MCF 10A (cell line): ENCODE measurements at regions of chr17 and their contacts with region 1.

Region 1: GRCh38 chr17:44123356-44124117 is at the start of gene HDAC5:
- DNase-seq: peak; percentile 92
- H3K4me3 Mint-ChIP-seq: peak within 1 kb of the TSS; percentile 86
- H3K27ac Mint-ChIP-seq: peak within 1 kb of the TSS; percentile 98
- H3K4me1 Mint-ChIP-seq: peaks cover 6% of the 10 kb centered on the region
- H3K27me3 Mint-ChIP-seq: no peaks in the 10 kb centered on the region
- CTCF ChIP-seq: peak; percentile 57
- total RNA-seq, gene HDAC5: 12.1 TPM in 2 replicates

Region 2: DNA sequence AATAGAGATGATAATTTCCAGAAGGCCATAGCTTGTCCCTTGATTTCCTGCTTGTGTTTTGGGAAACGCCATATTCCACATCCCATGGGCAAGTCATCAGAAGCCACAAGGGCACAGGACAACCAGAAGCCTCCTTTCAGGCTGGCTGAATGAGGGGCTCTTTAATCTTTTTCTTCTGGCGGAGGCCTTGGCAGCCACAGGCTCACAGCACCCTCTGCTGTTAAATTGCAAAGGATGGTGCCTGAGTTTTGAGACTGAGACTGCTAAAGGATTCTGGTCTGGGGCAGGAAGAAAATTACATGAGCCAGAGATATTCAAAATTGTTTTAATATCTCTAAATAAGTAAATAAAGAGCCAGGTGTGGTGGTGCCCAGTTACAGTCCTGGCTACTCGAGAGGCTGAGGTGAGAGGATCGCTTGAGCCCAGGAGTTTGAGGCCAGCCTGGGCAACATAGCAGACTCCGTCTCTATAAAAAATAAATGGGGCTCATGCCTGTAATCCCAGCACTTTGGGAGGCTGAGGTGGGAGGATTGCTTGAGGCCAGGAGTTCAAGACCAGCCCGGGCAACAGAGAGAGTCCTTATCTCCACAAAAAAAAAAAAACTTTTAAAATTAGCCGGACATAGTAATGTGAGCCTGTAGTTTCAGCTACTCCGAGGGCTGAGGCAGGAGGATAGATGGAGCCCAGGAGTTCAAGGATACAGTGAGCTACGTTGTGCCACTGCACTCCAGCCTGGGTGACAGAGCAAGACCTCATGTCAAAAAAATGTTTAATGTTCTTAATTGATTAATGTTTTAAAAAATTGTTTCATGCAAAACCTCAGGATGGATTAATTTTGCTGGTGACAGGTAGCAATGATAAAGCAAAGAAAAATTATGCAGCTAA is 1185.6 kb before region 1 on chr17:
- CTCF ChIA-PET with region 1: no interaction called
- POLR2A ChIA-PET with region 1: no interaction called
- intact Hi-C with region 1: no loop called
- DNase-seq: peak; percentile 60
- H3K4me3 Mint-ChIP-seq: no peak overlapping the region
- H3K27ac Mint-ChIP-seq: no peak overlapping the region
- H3K4me1 Mint-ChIP-seq: no peaks in the 10 kb centered on the region
- H3K27me3 Mint-ChIP-seq: peaks cover 12% of the 10 kb centered on the region
- CTCF ChIP-seq: peak; percentile 49

Region 3: DNA sequence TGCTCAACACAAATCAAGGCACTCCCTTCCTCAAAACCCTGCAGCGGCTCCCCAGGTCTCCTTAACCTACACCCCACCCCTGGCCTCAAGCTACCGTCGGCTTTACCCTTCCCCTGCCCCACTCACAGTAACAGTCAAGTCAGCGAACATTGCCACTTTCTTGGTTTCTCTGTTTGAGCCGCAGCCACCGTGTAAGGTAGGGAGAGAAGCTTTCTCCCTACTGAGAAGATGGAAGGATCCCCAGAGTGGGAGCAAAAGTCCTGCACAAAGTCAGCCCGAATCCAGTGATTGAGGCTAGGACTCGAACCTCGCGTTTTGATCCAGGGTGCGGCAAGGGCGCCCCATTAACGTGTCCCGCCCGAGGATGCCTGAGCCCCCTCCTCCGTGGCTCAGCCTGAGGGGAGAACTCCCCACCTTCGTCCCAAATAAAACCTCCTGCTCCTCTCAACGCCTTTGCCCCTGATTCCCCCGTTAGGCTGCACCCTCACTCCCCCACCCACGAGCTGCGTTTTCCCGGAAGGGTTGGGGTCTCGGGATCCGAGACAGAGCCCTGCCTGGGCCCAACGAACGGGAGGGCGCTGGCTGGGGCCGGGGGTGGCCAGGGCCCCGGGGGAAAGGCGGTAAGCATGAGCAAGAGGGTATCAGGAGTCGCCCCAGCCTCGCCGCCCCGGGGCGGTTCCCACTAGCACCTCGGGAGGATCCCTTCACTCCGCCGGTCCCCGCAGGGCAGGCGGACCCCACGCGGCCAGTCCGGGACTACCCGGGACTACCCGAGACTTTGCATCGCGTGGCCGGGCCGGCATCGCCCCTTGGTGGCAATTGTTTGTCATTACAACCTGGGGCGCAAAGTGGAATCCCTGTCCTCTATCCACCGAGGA is 129.0 kb before region 1 on chr17:
- CTCF ChIA-PET with region 1: no interaction called
- POLR2A ChIA-PET with region 1: no interaction called
- intact Hi-C with region 1: no loop called
- DNase-seq: peak; percentile 69
- H3K4me3 Mint-ChIP-seq: peak overlapping the region; percentile 64
- H3K27ac Mint-ChIP-seq: no peak overlapping the region
- H3K4me1 Mint-ChIP-seq: peaks cover 8% of the 10 kb centered on the region
- H3K27me3 Mint-ChIP-seq: no peaks in the 10 kb centered on the region
- CTCF ChIP-seq: peak; percentile 95

Region 4: GRCh38 chr17:44086364-44087311 is 36.9 kb before region 1 on chr17:
- CTCF ChIA-PET with region 1: interaction called, 4 read pairs
- POLR2A ChIA-PET with region 1: interaction called, 16 read pairs
- intact Hi-C with region 1: loop called (anchors 5 kb)
- DNase-seq: peak; percentile 90
- H3K4me3 Mint-ChIP-seq: peak overlapping the region; percentile 40
- H3K27ac Mint-ChIP-seq: peak overlapping the region; percentile 52
- H3K4me1 Mint-ChIP-seq: peaks cover 21% of the 10 kb centered on the region
- H3K27me3 Mint-ChIP-seq: no peaks in the 10 kb centered on the region
- CTCF ChIP-seq: no peak

Region 5: GRCh38 chr17:44108440-44109324 is 14.9 kb before region 1 on chr17:
- CTCF ChIA-PET with region 1: no interaction called
- POLR2A ChIA-PET with region 1: interaction called, 10 read pairs
- intact Hi-C with region 1: loop called (anchors 2 kb)
- DNase-seq: peak; percentile 86
- H3K4me3 Mint-ChIP-seq: no peak overlapping the region
- H3K27ac Mint-ChIP-seq: no peak overlapping the region
- H3K4me1 Mint-ChIP-seq: peaks cover 11% of the 10 kb centered on the region
- H3K27me3 Mint-ChIP-seq: no peaks in the 10 kb centered on the region
- CTCF ChIP-seq: no peak

Region 6: GRCh38 chr17:44141717-44142285 is 18.3 kb after region 1 on chr17 and contains the start of gene HROB:
- CTCF ChIA-PET with region 1: interaction called, 3 read pairs
- POLR2A ChIA-PET with region 1: interaction called, 66 read pairs
- intact Hi-C with region 1: no loop called
- DNase-seq: peak; percentile 98
- H3K4me3 Mint-ChIP-seq: peak within 1 kb of the TSS; percentile 78
- H3K27ac Mint-ChIP-seq: peak within 1 kb of the TSS; percentile 93
- H3K4me1 Mint-ChIP-seq: peaks cover 26% of the 10 kb centered on the region
- H3K27me3 Mint-ChIP-seq: no peaks in the 10 kb centered on the region
- CTCF ChIP-seq: peak; percentile 84
- total RNA-seq, gene HROB: 5.4 and 6.7 TPM in 2 replicates

Region 7: GRCh38 chr17:44170499-44171201 is 47.1 kb after region 1 on chr17 and contains the start of gene ASB16:
- CTCF ChIA-PET with region 1: interaction called, 14 read pairs
- POLR2A ChIA-PET with region 1: interaction called, 22 read pairs
- intact Hi-C with region 1: no loop called
- DNase-seq: no peak
- H3K4me3 Mint-ChIP-seq: no peak within 1 kb of the TSS
- H3K27ac Mint-ChIP-seq: no peak within 1 kb of the TSS
- H3K4me1 Mint-ChIP-seq: peaks cover 11% of the 10 kb centered on the region
- H3K27me3 Mint-ChIP-seq: no peaks in the 10 kb centered on the region
- CTCF ChIP-seq: no peak
- total RNA-seq, gene ASB16: not detected in 2 replicates

Region 8: GRCh38 chr17:44235583-44235936 is 112.0 kb after region 1 on chr17:
- CTCF ChIA-PET with region 1: no interaction called
- POLR2A ChIA-PET with region 1: no interaction called
- intact Hi-C with region 1: no loop called
- DNase-seq: peak; percentile 86
- H3K4me3 Mint-ChIP-seq: no peak overlapping the region
- H3K27ac Mint-ChIP-seq: peak overlapping the region; percentile 53
- H3K4me1 Mint-ChIP-seq: peaks cover 14% of the 10 kb centered on the region
- H3K27me3 Mint-ChIP-seq: no peaks in the 10 kb centered on the region
- CTCF ChIP-seq: no peak

Region 9: DNA sequence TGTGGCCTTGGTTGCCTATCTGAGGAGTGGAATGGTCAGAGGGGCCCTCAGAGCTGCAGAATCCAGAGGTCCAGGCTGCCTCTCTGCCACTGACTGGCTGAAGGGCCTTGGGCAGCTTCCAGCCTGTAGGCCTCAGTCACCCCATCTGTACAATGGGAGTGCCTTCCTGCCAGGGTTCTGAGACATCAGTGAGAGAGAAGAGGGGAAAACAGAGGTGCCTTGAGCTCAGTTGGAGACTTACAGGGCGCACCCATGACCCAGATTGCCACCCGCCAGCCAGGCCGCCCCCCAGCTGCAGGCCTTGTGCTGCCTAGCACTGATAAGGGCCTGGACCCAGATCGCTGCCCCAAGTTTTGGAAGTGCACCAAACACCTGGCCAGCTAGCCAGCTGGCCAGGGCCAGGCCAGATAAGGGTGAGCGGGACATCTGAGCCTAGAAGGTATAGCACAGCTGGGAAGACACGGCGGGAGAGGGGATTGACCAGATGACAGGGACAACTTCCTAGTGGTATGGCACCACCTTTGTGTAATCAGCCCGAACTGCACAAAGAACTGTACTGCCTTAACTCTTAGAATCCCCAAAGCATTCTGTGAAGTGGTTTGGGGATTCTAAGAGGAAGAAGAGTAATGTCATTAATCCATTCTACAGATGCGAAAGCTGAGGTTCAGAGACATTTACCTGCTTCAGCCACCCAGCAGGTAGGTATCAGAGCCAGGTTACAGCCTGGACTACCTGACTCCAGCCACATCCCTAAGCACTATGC is 143.0 kb after region 1 on chr17:
- CTCF ChIA-PET with region 1: no interaction called
- POLR2A ChIA-PET with region 1: no interaction called
- intact Hi-C with region 1: no loop called
- DNase-seq: peak; percentile 9
- H3K4me3 Mint-ChIP-seq: no peak overlapping the region
- H3K27ac Mint-ChIP-seq: no peak overlapping the region
- H3K4me1 Mint-ChIP-seq: no peaks in the 10 kb centered on the region
- H3K27me3 Mint-ChIP-seq: peaks cover 15% of the 10 kb centered on the region
- CTCF ChIP-seq: no peak